ENCODE measurements at regions of chr6 and their contacts with region 1.

Region 1: GRCh38 chr6:53139841-53140413 is 8.7 kb downstream of the GCM1 start:
- DNase-seq: no peak
- ATAC-seq: no peak
- H3K4me3 ChIP-seq: no peak overlapping the region
- H3K27ac ChIP-seq: no peak overlapping the region
- H3K4me1 ChIP-seq: no peaks in the 10 kb centered on the region
- H3K27me3 ChIP-seq: peaks cover 15% of the 10 kb centered on the region; the same call in 1 of the 2 replicates
- CTCF ChIP-seq: no peak

Region 2: GRCh38 chr6:52712136-52712535 is 427.8 kb before region 1 on chr6:
- CTCF ChIA-PET with region 1: interaction called, 10 read pairs
- POLR2A ChIA-PET with region 1: no interaction called
- in situ Hi-C with region 1: no loop called
- intact Hi-C with region 1: no loop called
- DNase-seq: no peak
- ATAC-seq: no peak
- H3K4me3 ChIP-seq: no peak overlapping the region
- H3K27ac ChIP-seq: no peak overlapping the region
- H3K4me1 ChIP-seq: no peaks in the 10 kb centered on the region
- H3K27me3 ChIP-seq: no peaks in the 10 kb centered on the region
- CTCF ChIP-seq: no peak

Region 3: DNA sequence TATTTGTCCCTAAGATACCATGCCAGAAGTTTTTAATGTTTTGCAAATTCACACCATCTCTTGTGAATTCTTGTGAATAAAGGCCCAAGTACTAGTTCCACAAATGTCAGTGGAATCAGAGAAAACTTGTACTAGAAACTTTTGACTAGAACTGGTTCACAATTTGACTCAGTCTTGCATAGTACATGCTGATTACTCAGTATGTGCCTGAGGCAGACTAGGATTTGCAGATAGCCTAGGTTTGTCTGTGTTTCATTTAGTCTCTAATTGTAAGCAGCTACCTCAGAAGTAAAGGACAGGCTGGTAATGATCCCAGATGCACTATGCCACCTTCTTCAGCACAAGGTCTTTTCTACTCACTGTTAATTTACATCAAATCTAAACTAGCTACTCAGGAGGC is 110.7 kb before region 1 on chr6:
- CTCF ChIA-PET with region 1: no interaction called
- POLR2A ChIA-PET with region 1: no interaction called
- in situ Hi-C with region 1: no loop called
- intact Hi-C with region 1: no loop called
- DNase-seq: no peak
- ATAC-seq: no peak
- H3K4me3 ChIP-seq: no peak overlapping the region
- H3K27ac ChIP-seq: no peak overlapping the region
- H3K4me1 ChIP-seq: no peaks in the 10 kb centered on the region
- H3K27me3 ChIP-seq: no peaks in the 10 kb centered on the region
- CTCF ChIP-seq: no peak

Measured in Panc1 (cell line).